Right cardiac atrium (tissue), 5 donors: ENCODE measurements at regions of chr5 and their contacts with region 1.

Region 1: DNA sequence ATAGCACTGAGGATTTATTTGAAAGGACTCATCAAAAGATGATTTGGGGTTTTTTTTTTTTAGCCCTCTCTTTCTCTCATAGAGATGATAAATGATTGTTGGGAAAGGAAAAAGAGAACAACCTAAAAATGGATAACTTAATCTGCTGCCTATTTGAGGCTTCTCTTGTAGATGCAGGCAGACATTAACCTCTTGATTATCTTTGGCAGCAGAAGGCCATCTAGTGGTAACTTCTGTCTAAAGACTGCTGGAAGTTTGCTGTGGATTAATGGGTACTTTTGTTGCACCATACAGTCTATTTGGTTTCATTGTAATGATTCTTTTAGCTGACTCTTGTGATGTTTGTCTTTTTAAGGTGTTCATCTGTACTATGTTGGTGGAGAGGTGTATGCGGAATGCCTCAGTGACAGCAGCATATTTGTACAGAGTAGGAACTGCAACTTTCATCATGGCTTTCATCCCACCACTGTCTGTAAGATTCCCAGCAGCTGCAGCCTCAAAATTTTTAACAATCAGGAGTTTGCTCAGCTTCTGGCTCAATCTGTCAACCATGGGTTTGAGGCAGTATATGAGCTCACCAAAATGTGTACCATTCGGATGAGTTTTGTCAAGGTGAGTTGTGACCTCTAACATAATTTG is 18.8 kb downstream of the SMIM32 start:
- DNase-seq: no peak
- ATAC-seq: peak in 1 of 2 donors; percentile 62
- H3K4me3 ChIP-seq: no peak overlapping the region
- H3K27ac ChIP-seq: no peak overlapping the region
- H3K4me1 ChIP-seq: no peaks in the 10 kb centered on the region
- H3K27me3 ChIP-seq: no peaks in the 10 kb centered on the region

Region 2: GRCh38 chr5:136062366-136063274 is 111.5 kb before region 1 on chr5:
- intact Hi-C with region 1: loop called in 1 of 4 experiments (anchors 5 kb)
- DNase-seq: no peak
- ATAC-seq: no peak
- H3K4me3 ChIP-seq: no peak overlapping the region
- H3K27ac ChIP-seq: no peak overlapping the region
- H3K4me1 ChIP-seq: peaks cover 5% of the 10 kb centered on the region
- H3K27me3 ChIP-seq: no peaks in the 10 kb centered on the region

Region 3: GRCh38 chr5:136080483-136081216 is 93.5 kb before region 1 on chr5:
- intact Hi-C with region 1: loop called in 1 of 4 experiments (anchors 10 kb)
- DNase-seq: peak; percentile 89 to 97 (median 95)
- ATAC-seq: peak; percentile 97 to 98
- H3K4me3 ChIP-seq: peak overlapping the region; percentile 13
- H3K27ac ChIP-seq: peak overlapping the region; percentile 13
- H3K4me1 ChIP-seq: no peaks in the 10 kb centered on the region
- H3K27me3 ChIP-seq: no peaks in the 10 kb centered on the region